Naive thymus-derived CD4-positive, alpha-beta T cell (primary cell): ENCODE measurements at regions of chr11 and their contacts with region 1.

Region 1: DNA sequence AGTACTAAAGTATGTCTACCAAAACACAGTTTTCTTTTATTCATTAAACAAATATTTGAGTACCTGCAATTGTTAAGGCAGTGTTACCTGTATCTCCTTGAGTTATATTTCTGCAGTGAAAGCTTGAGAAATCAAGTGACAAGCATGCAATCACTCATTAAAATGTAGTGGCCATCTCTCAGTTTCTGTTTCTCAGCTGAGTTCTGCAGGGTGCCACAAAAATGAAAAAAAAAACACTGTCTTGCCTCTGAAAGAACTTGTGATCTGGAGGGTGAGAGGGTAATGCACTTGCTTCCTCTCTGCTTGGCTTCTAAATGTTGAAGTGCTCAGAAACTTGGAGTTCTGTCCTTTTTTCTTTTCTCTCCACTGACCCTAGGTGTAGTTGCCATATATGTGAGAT is 6.8 kb downstream of the QSER1 start:
- DNase-seq: no peak
- ATAC-seq: no peak
- H3K4me3 ChIP-seq: no peak overlapping the region
- H3K4me3 Mint-ChIP-seq: peak overlapping the region in 1 of 10 donors; percentile 43
- H3K27ac ChIP-seq: no peak overlapping the region
- H3K27ac Mint-ChIP-seq: peak overlapping the region in 1 of 9 donors; percentile 14
- H3K4me1 ChIP-seq: peaks cover 0 to 3% of the 10 kb centered on the region in 2 donors
- H3K4me1 Mint-ChIP-seq: peaks cover 37 to 75% (median 59%) of the 10 kb centered on the region in 7 donors
- H3K27me3 ChIP-seq: no peaks in the 10 kb centered on the region
- H3K27me3 Mint-ChIP-seq: no peaks in the 10 kb centered on the region

Region 2: GRCh38 chr11:32884770-32885384 is 14.6 kb before region 1 on chr11:
- CTCF ChIA-PET with region 1: no interaction called
- POLR2A ChIA-PET with region 1: interaction called, 3 read pairs
- intact Hi-C with region 1: loop called in 1 of 2 experiments (anchors 1 kb)
- DNase-seq: no peak
- ATAC-seq: peak; percentile 55
- H3K4me3 ChIP-seq: no peak overlapping the region
- H3K4me3 Mint-ChIP-seq: no peak overlapping the region
- H3K27ac ChIP-seq: no peak overlapping the region
- H3K27ac Mint-ChIP-seq: no peak overlapping the region
- H3K4me1 ChIP-seq: no peaks in the 10 kb centered on the region
- H3K4me1 Mint-ChIP-seq: peaks cover 0 to 6% (median 0%) of the 10 kb centered on the region in 7 donors
- H3K27me3 ChIP-seq: no peaks in the 10 kb centered on the region
- H3K27me3 Mint-ChIP-seq: peaks cover 0 to 11% (median 0%) of the 10 kb centered on the region in 5 donors

Region 3: GRCh38 chr11:32939046-32939445 is 39.6 kb after region 1 on chr11:
- CTCF ChIA-PET with region 1: no interaction called
- POLR2A ChIA-PET with region 1: interaction called, 3 read pairs
- intact Hi-C with region 1: loop called in 1 of 2 experiments (anchors 1 kb)
- DNase-seq: no peak
- ATAC-seq: no peak
- H3K4me3 ChIP-seq: no peak overlapping the region
- H3K4me3 Mint-ChIP-seq: no peak overlapping the region
- H3K27ac ChIP-seq: no peak overlapping the region
- H3K27ac Mint-ChIP-seq: peak overlapping the region in 1 of 9 donors; percentile 28
- H3K4me1 ChIP-seq: no peaks in the 10 kb centered on the region
- H3K4me1 Mint-ChIP-seq: peaks cover 6 to 23% (median 12%) of the 10 kb centered on the region in 7 donors
- H3K27me3 ChIP-seq: no peaks in the 10 kb centered on the region
- H3K27me3 Mint-ChIP-seq: no peaks in the 10 kb centered on the region

Region 4: GRCh38 chr11:33000181-33000580 is 100.7 kb after region 1 on chr11:
- CTCF ChIA-PET with region 1: no interaction called
- POLR2A ChIA-PET with region 1: no interaction called
- intact Hi-C with region 1: no loop called
- DNase-seq: no peak
- ATAC-seq: no peak
- H3K4me3 ChIP-seq: no peak overlapping the region
- H3K4me3 Mint-ChIP-seq: no peak overlapping the region
- H3K27ac ChIP-seq: no peak overlapping the region
- H3K27ac Mint-ChIP-seq: no peak overlapping the region
- H3K4me1 ChIP-seq: peaks cover 0 to 11% of the 10 kb centered on the region in 2 donors
- H3K4me1 Mint-ChIP-seq: peaks cover 7 to 17% (median 13%) of the 10 kb centered on the region in 7 donors
- H3K27me3 ChIP-seq: no peaks in the 10 kb centered on the region
- H3K27me3 Mint-ChIP-seq: peaks cover 0 to 73% (median 0%) of the 10 kb centered on the region in 5 donors

Region 5: GRCh38 chr11:33052231-33052630 is 152.8 kb after region 1 on chr11:
- CTCF ChIA-PET with region 1: no interaction called
- POLR2A ChIA-PET with region 1: no interaction called
- intact Hi-C with region 1: no loop called
- DNase-seq: no peak
- ATAC-seq: no peak
- H3K4me3 ChIP-seq: no peak overlapping the region
- H3K4me3 Mint-ChIP-seq: no peak overlapping the region
- H3K27ac ChIP-seq: no peak overlapping the region
- H3K27ac Mint-ChIP-seq: no peak overlapping the region
- H3K4me1 ChIP-seq: no peaks in the 10 kb centered on the region
- H3K4me1 Mint-ChIP-seq: peaks cover 0 to 4% (median 0%) of the 10 kb centered on the region in 7 donors
- H3K27me3 ChIP-seq: no peaks in the 10 kb centered on the region
- H3K27me3 Mint-ChIP-seq: no peaks in the 10 kb centered on the region

Region 6: GRCh38 chr11:33172996-33173395 is 273.6 kb after region 1 on chr11:
- CTCF ChIA-PET with region 1: no interaction called
- POLR2A ChIA-PET with region 1: no interaction called
- intact Hi-C with region 1: no loop called
- DNase-seq: no peak
- ATAC-seq: no peak
- H3K4me3 ChIP-seq: no peak overlapping the region
- H3K4me3 Mint-ChIP-seq: no peak overlapping the region
- H3K27ac ChIP-seq: no peak overlapping the region
- H3K27ac Mint-ChIP-seq: no peak overlapping the region
- H3K4me1 ChIP-seq: no peaks in the 10 kb centered on the region
- H3K4me1 Mint-ChIP-seq: peaks cover 0 to 3% (median 0%) of the 10 kb centered on the region in 7 donors
- H3K27me3 ChIP-seq: no peaks in the 10 kb centered on the region
- H3K27me3 Mint-ChIP-seq: no peaks in the 10 kb centered on the region